Aorta (tissue), 5 donors: ENCODE measurements at regions of chr1 and their contacts with region 1.

Region 1: GRCh38 chr1:153775458-153776327 is 486 bp downstream of the SLC27A3 start:
- DNase-seq: peak; percentile 82 to 90
- ATAC-seq: peak; percentile 53
- H3K4me3 ChIP-seq: peak overlapping the region; percentile 47 to 50
- H3K27ac ChIP-seq: peak overlapping the region; percentile 54 to 82
- H3K4me1 ChIP-seq: no peaks in the 10 kb centered on the region
- H3K27me3 ChIP-seq: no peaks in the 10 kb centered on the region

Region 2: GRCh38 chr1:153494976-153495535 is 280.6 kb before region 1 on chr1:
- intact Hi-C with region 1: no loop called
- DNase-seq: peak; percentile 82 to 96
- ATAC-seq: peak; percentile 78
- H3K4me3 ChIP-seq: no peak overlapping the region
- H3K27ac ChIP-seq: no peak overlapping the region
- H3K4me1 ChIP-seq: peaks cover 0 to 8% of the 10 kb centered on the region in 2 donors
- H3K27me3 ChIP-seq: no peaks in the 10 kb centered on the region

Region 3: GRCh38 chr1:153677718-153678505 is 97.8 kb before region 1 on chr1:
- intact Hi-C with region 1: loop called (anchors 2 to 5 kb)
- DNase-seq: peak; percentile 66 to 79
- ATAC-seq: peak; percentile 81
- H3K4me3 ChIP-seq: peak overlapping the region; percentile 30 to 79
- H3K27ac ChIP-seq: peak overlapping the region in 1 of 2 donors; percentile 63
- H3K4me1 ChIP-seq: no peaks in the 10 kb centered on the region
- H3K27me3 ChIP-seq: no peaks in the 10 kb centered on the region